ENCODE measurements at regions of chr1 and their contacts with region 1.

Region 1: DNA sequence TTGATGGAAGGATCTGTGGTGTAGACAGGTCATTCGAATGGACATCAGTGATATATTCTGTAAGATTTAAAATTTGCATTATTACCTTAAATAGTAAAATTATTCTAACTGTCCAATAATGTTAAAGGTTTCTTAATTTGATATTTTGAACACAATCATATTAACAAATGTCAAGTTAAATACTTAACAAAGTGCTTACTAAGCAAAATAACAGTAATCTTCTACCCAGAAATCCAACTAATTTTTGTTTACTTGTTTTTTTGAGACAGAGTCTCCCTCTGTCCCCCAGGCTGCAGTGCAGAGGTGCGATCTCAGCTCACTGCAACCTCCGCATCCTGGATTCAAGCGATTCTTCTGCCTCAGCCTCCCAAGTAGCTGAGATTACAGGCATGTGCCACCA is 33.9 kb downstream of the USP33 start:
- DNase-seq: no peak

Region 2: DNA sequence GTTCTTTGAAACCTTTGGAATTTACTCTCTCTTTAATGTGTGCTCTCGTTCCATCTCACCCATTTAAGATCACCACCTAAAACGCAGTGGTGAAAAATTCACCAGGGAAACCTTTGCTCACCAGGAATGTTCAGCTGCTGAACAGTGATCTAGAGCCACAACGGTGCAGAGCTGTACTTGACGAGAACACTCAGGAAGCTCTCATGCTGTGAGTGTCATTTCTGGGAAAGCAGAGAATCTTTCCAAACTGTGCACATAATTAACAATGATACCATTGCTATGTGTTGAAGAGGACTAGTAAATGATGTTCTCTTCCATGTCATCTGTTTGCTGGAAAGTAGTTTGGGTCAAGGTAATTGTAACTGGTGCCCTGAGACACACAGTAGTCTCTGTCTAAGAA is 160.4 kb before region 1 on chr1:
- intact Hi-C with region 1: no loop called
- DNase-seq: no peak

Region 3: GRCh38 chr1:77950873-77951272 is 225.2 kb after region 1 on chr1:
- intact Hi-C with region 1: loop called in 1 of 2 experiments (anchors 10 kb)
- DNase-seq: no peak